PC-3 (cell line): ENCODE measurements at regions of chr5 and their contacts with region 1.

Region 1: DNA sequence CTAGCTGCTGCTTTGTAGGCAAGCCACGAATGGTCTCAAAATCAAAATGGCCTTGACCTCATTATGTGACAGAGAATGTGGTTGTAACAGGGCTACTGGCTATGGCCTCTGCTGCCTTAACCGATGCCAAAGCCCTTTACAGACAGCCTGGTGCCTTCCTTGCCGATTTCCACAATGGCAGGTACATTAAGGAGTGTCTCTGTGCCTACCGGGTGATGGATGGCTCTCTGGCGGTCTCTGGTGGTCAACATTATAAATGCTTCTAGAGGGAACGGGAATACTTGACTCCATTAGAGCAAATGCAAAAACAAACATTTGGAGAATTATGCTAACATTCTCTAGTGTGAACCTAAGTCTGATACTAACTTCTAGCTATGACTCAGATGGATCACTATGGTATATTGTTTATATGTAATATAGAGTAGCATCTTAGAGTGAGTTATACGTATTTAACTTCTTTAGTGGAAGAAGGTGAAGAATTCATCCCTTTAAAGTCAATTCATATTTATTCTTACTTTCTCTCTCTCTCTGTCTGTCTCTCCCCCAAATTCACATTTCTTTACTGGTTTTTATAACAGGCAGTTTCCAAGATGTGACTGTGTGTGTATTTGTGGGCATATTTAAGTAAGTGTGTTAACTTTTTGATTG is 52.5 kb downstream of the RPS23 start:
- DNase-seq: peak; percentile 80
- ATAC-seq: peak; percentile 93
- H3K4me3 ChIP-seq: no peak overlapping the region
- H3K27ac ChIP-seq: no peak overlapping the region
- H3K4me1 ChIP-seq: no peaks in the 10 kb centered on the region
- H3K27me3 ChIP-seq: no peaks in the 10 kb centered on the region
- CTCF ChIP-seq: peak; percentile 88

Region 2: GRCh38 chr5:81851481-81852178 is 374.0 kb before region 1 on chr5:
- CTCF ChIA-PET with region 1: no interaction called
- POLR2A ChIA-PET with region 1: no interaction called
- intact Hi-C with region 1: loop called (anchors 2 kb)
- DNase-seq: peak; percentile 86
- ATAC-seq: peak; percentile 92
- H3K4me3 ChIP-seq: peak overlapping the region; percentile 67
- H3K27ac ChIP-seq: peak overlapping the region; percentile 71
- H3K4me1 ChIP-seq: peaks cover 10% of the 10 kb centered on the region
- H3K27me3 ChIP-seq: no peaks in the 10 kb centered on the region
- CTCF ChIP-seq: no peak

Region 3: DNA sequence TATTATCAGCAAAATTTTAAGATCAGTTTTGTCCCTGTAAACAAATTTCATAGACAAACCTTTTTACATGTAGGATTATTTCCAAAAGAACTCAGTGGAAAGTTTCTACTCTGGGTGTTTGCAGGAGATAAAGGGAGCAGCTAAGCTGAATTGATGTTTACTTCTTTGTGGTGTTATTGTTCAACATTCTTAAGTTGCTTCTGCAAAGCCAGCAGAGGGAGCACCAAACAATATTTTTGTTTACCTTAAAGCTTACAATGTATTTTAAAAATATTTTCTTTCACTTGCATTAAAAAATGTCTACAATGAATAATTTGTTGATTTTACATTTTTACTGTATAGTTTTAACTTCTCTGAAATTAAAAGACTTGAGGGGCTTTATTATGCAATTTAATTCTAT is 118.4 kb before region 1 on chr5:
- CTCF ChIA-PET with region 1: no interaction called
- POLR2A ChIA-PET with region 1: no interaction called
- intact Hi-C with region 1: loop called (anchors 1 kb)
- DNase-seq: peak; percentile 30
- ATAC-seq: peak; percentile 56; the same call in 1 of the 2 replicates
- H3K4me3 ChIP-seq: no peak overlapping the region
- H3K27ac ChIP-seq: no peak overlapping the region
- H3K4me1 ChIP-seq: no peaks in the 10 kb centered on the region
- H3K27me3 ChIP-seq: no peaks in the 10 kb centered on the region
- CTCF ChIP-seq: peak; percentile 76

Region 4: GRCh38 chr5:82174128-82174918 is 51.3 kb before region 1 on chr5:
- CTCF ChIA-PET with region 1: no interaction called
- POLR2A ChIA-PET with region 1: no interaction called
- intact Hi-C with region 1: loop called (anchors 1 kb)
- DNase-seq: peak; percentile 79
- ATAC-seq: peak; percentile 76
- H3K4me3 ChIP-seq: no peak overlapping the region
- H3K27ac ChIP-seq: no peak overlapping the region
- H3K4me1 ChIP-seq: peaks cover 6% of the 10 kb centered on the region
- H3K27me3 ChIP-seq: no peaks in the 10 kb centered on the region
- CTCF ChIP-seq: peak; percentile 92